Prostate gland (tissue), 2 donors: ENCODE measurements at regions of chr1 and their contacts with region 1.

Region 1: DNA sequence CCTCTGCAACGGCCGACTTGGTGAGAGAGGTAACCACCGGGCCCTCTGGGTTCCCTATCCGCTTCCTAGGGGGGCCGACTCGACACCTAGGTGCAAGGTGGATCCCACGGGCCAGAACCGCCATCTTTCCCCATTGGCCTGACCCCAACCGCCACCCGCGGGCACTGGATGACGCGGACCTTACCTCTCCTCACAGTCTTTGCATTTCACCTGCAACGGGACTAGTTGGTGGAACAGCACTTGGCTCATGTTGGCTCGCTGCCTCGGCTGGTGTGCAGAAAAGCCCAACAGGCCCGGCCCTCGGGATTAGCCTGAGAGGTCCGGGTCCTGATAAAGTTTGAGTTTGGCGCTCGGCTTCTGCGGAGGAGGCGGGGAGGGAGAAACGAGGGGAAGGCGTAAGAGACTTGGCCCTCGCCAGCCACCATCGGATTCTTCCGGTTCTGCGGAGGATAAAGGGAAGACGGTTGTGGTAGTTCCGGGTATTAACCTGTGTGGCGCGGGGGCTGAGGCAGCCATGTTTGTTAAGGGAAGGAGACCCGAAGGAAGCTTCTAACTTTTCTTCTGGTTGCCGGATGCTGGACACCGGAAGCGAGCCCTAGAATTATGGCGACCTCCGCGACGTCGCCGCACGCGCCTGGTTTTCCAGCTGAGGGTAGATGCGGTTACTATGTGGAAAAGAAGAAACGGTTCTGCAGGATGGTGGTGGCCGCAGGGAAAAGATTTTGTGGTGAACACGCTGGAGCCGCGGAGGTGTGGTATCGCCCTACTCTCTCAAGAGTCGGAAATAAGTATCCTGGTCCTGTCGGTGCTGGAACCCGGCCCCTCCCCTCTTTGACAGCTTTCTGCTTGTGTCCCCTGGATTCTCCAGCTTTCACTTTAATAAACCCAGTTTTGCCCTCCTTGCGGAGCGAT is at the starts of genes SASS6 and TRMT13:
- DNase-seq: peak; percentile 98
- H3K4me3 ChIP-seq: peak within 1 kb of the TSS; percentile 59 to 71
- H3K27ac ChIP-seq: peak within 1 kb of the TSS; percentile 66 to 68
- H3K4me1 ChIP-seq: no peaks in the 10 kb centered on the region
- H3K27me3 ChIP-seq: no peaks in the 10 kb centered on the region
- CTCF ChIP-seq: peak in 1 of 4 experiments; percentile 32
- POLR2A ChIP-seq: no peak
- total RNA-seq, gene SASS6: 4.0 to 6.2 TPM
- total RNA-seq, gene TRMT13: 11.7 to 17.4 TPM

Region 2: GRCh38 chr1:99808391-99809115 is 324.3 kb before region 1 on chr1:
- intact Hi-C with region 1: loop called (anchors 5 kb)
- DNase-seq: peak; percentile 58
- H3K4me3 ChIP-seq: no peak overlapping the region
- H3K27ac ChIP-seq: peak overlapping the region; percentile 39 to 46
- H3K4me1 ChIP-seq: no peaks in the 10 kb centered on the region
- H3K27me3 ChIP-seq: no peaks in the 10 kb centered on the region
- CTCF ChIP-seq: peak in 3 of 4 experiments; percentile 59 to 76 (median 73)
- POLR2A ChIP-seq: no peak

Region 3: GRCh38 chr1:100037927-100038659 is 94.7 kb before region 1 on chr1:
- intact Hi-C with region 1: loop called (anchors 5 kb)
- DNase-seq: peak; percentile 91
- H3K4me3 ChIP-seq: peak overlapping the region; percentile 94 to 96
- H3K27ac ChIP-seq: peak overlapping the region; percentile 97 to 99
- H3K4me1 ChIP-seq: no peaks in the 10 kb centered on the region
- H3K27me3 ChIP-seq: no peaks in the 10 kb centered on the region
- CTCF ChIP-seq: peak in 1 of 4 experiments; percentile 8
- POLR2A ChIP-seq: peak; percentile 98

Region 4: DNA sequence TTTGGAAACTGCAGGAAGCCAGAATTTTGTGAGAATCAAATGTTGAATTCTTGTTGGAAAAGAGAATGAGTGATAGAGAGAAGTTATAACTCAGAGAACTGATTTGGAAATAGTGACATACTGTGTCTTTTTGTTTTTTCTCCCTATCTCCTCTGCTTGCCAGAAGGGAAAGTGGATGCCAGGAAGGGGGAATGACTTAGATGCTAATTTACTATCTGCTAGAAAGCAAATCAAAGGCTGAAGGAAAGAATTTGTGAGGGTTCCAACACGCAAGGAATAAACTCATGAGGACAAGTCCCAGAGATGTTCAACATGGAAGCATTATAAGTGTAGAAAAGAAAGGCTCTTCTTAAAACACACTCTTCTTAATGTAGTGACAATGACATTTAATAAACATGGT is 65.8 kb after region 1 on chr1:
- intact Hi-C with region 1: no loop called
- DNase-seq: no peak
- H3K4me3 ChIP-seq: no peak overlapping the region
- H3K27ac ChIP-seq: no peak overlapping the region
- H3K4me1 ChIP-seq: no peaks in the 10 kb centered on the region
- H3K27me3 ChIP-seq: no peaks in the 10 kb centered on the region
- CTCF ChIP-seq: no peak
- POLR2A ChIP-seq: no peak

Region 5: GRCh38 chr1:100249537-100250257 is 116.9 kb after region 1 on chr1 and contains the start of gene DBT:
- intact Hi-C with region 1: loop called (anchors 5 kb)
- DNase-seq: peak; percentile 97
- H3K4me3 ChIP-seq: peak within 1 kb of the TSS; percentile 69 to 90
- H3K27ac ChIP-seq: peak within 1 kb of the TSS; percentile 84 to 85
- H3K4me1 ChIP-seq: no peaks in the 10 kb centered on the region
- H3K27me3 ChIP-seq: no peaks in the 10 kb centered on the region
- CTCF ChIP-seq: peak in 1 of 4 experiments; percentile 18
- POLR2A ChIP-seq: peak; percentile 81
- total RNA-seq, gene DBT: 7.6 to 17.3 TPM

Region 6: GRCh38 chr1:100459358-100460114 is 326.7 kb after region 1 on chr1:
- intact Hi-C with region 1: loop called (anchors 5 kb)
- DNase-seq: peak; percentile 76
- H3K4me3 ChIP-seq: no peak overlapping the region
- H3K27ac ChIP-seq: peak overlapping the region in 1 of 2 donors; percentile 39
- H3K4me1 ChIP-seq: peaks cover 3% of the 10 kb centered on the region
- H3K27me3 ChIP-seq: no peaks in the 10 kb centered on the region
- CTCF ChIP-seq: peak; percentile 58 to 89 (median 82)
- POLR2A ChIP-seq: no peak

Region 7: GRCh38 chr1:100719490-100719889 is 586.7 kb after region 1 on chr1 and contains the start of gene VCAM1:
- intact Hi-C with region 1: no loop called
- DNase-seq: no peak
- H3K4me3 ChIP-seq: no peak within 1 kb of the TSS
- H3K27ac ChIP-seq: no peak within 1 kb of the TSS
- H3K4me1 ChIP-seq: no peaks in the 10 kb centered on the region
- H3K27me3 ChIP-seq: no peaks in the 10 kb centered on the region
- CTCF ChIP-seq: no peak
- POLR2A ChIP-seq: no peak
- total RNA-seq, gene VCAM1: 2.9 to 9.3 TPM

Region 8: GRCh38 chr1:100895540-100896483 is 763.0 kb after region 1 on chr1 and contains the start of gene SLC30A7:
- intact Hi-C with region 1: loop called (anchors 10 kb)
- DNase-seq: peak; percentile 94
- H3K4me3 ChIP-seq: peak within 1 kb of the TSS; percentile 55 to 76
- H3K27ac ChIP-seq: peak within 1 kb of the TSS; percentile 94
- H3K4me1 ChIP-seq: peaks cover 2% of the 10 kb centered on the region
- H3K27me3 ChIP-seq: no peaks in the 10 kb centered on the region
- CTCF ChIP-seq: no peak
- POLR2A ChIP-seq: peak; percentile 51
- total RNA-seq, gene SLC30A7: 19.8 to 31.0 TPM